ENCODE measurements at regions of chr4 and their contacts with region 1.

Region 1: DNA sequence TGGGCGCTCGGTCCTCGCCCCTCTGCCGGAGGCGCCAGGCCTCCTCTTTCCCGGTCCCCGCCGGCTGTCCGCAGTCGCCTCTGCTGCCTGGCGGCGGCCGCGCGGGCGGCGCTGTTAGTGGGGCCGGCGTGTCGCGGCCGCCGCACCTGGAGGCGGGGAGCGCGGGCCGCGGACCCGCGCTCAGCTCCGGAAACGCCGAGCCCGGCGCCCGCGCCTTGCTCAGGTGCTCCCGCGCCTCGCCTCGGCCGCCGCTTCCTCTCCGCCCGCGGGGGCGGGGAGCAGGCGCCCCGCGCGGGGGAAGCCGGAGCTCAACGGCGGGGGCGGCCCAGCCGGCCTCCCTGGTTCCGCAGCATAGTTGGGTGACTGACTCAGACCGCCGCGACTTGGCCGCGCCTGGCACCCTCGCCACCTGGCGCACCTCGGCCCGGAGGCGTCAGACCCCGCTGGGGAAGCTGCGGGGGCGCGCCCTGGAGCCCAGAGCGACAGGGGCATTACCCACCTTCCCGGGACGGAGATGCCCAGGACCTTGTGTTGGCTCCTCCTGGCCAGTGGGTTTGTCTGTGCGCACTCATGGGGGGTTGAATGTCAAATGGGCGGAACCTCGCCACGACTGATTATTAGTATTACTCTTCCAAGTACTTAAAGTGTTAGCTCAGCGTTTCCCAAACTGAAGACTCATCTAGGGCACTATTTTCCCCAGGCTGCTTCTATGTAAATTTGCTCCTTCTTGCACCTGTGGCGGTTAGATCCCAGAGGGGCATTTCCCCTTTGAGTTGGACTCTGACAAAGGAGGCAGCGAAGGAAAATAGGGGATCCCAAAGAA is at the start of gene ARAP2:
- DNase-seq: peak; percentile 80
- ATAC-seq: peak; percentile 77
- H3K4me3 Mint-ChIP-seq: peak within 1 kb of the TSS; percentile 93
- H3K27ac Mint-ChIP-seq: peak within 1 kb of the TSS; percentile 96
- H3K4me1 Mint-ChIP-seq: peaks cover 39% of the 10 kb centered on the region
- H3K27me3 Mint-ChIP-seq: no peaks in the 10 kb centered on the region
- total RNA-seq, gene ARAP2: 52.9 to 76.1 TPM

Region 2: GRCh38 chr4:36189511-36190226 is 54.8 kb before region 1 on chr4:
- CTCF ChIA-PET with region 1: interaction called, 15 read pairs
- DNase-seq: peak; percentile 74
- ATAC-seq: peak; percentile 91
- H3K4me3 Mint-ChIP-seq: peak overlapping the region; percentile 51
- H3K27ac Mint-ChIP-seq: peak overlapping the region; percentile 87
- H3K4me1 Mint-ChIP-seq: peaks cover 53% of the 10 kb centered on the region
- H3K27me3 Mint-ChIP-seq: no peaks in the 10 kb centered on the region

Region 3: GRCh38 chr4:36255577-36255976 is 11.1 kb after region 1 on chr4:
- CTCF ChIA-PET with region 1: interaction called, 38 read pairs
- DNase-seq: peak; percentile 81
- ATAC-seq: peak; percentile 84
- H3K4me3 Mint-ChIP-seq: peak overlapping the region; percentile 53
- H3K27ac Mint-ChIP-seq: peak overlapping the region; percentile 94
- H3K4me1 Mint-ChIP-seq: peaks cover 52% of the 10 kb centered on the region
- H3K27me3 Mint-ChIP-seq: no peaks in the 10 kb centered on the region

Region 4: DNA sequence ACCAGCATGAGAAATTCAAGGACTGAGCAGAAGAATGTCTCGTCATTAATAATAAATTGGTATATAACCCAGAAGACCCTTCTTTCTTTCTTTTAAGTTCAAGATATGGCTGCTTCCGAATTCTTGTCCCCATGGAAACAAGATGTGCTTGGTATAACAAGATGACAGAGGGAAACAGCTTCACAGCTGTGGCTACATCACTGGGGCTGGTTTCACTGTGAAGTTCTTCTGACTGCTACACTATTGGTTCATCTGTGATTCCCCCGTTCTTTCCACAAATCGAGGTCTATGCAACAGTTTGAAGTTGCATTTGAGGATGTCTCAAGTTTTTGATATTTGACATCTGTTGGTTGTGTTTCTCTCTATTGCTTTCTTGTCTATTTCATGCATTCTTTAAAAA is 24.6 kb after region 1 on chr4:
- CTCF ChIA-PET with region 1: interaction called, 18 read pairs
- DNase-seq: peak; percentile 82
- ATAC-seq: peak; percentile 97
- H3K4me3 Mint-ChIP-seq: no peak overlapping the region
- H3K27ac Mint-ChIP-seq: peak overlapping the region; percentile 81
- H3K4me1 Mint-ChIP-seq: peaks cover 46% of the 10 kb centered on the region
- H3K27me3 Mint-ChIP-seq: no peaks in the 10 kb centered on the region

Region 5: DNA sequence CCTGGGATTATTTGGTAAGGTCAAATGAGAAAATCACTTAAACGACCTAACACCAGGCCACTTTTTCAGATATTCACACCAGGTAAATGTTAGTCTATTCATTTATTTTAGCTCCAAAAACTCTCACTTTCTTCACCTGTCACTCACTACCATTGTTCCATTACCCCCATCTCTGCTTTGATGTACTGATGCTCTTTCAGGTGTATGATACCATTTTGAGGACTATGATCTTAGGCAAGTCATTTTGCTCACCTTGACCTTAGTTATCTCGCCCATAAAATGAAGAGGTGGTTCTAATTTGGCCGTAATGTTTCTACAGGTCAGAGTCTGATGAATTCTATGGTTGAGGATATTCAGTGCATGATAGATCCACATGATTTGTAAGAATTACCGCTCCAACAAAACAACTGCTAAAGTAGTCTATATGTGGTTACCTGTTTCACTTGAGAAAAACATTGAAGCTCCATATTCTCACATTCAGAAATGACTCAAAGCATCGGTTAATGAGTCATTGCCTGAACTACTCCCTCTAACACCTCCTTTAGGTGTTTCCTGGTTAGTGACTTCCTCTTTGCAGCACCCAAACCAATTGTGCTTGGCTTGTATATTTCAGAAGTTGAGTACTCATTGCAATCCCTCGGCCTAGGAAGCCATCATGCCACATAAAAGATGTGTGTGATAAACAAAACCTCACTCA is 41.5 kb after region 1 on chr4:
- CTCF ChIA-PET with region 1: interaction called, 28 read pairs
- DNase-seq: peak; percentile 85
- ATAC-seq: peak; percentile 93
- H3K4me3 Mint-ChIP-seq: peak overlapping the region; percentile 57
- H3K27ac Mint-ChIP-seq: peak overlapping the region; percentile 89
- H3K4me1 Mint-ChIP-seq: peaks cover 73% of the 10 kb centered on the region
- H3K27me3 Mint-ChIP-seq: no peaks in the 10 kb centered on the region